BJ (cell line): ENCODE measurements at regions of chr16 and their contacts with region 1.

Region 1: DNA sequence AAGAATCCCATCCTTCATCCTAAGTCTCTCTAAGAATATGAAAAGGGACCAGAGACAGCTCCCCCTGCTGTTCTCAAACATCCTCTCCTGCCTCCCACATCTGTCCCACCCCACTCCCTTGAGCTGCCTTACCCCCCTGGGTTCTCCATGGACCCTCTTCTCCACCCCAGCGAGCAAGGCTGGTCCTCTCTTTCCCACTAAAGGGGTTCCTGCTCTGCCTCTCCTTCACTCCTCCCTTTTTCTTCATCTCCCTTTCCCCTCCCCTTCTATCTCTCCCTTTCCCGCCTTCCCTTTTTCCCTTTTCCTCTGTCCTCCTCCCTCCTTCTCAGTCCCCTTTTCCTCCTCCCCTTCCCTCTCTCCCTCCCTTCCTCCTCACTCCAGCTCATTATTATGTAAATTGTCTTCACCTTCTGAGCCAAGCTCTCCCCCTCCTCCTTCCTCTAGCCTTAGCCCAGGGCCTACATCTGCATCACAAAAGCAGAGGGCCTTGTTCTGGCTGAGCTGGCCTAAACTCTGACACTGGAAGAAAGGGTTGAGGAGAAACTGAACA is 90.0 kb downstream of the GNAO1 start:
- DNase-seq: no peak
- H3K4me3 ChIP-seq: no peak overlapping the region
- H3K27me3 ChIP-seq: no peaks in the 10 kb centered on the region
- CTCF ChIP-seq: peak; percentile 52

Region 2: GRCh38 chr16:56263711-56264608 is 17.4 kb before region 1 on chr16:
- CTCF ChIA-PET with region 1: interaction called, 19 read pairs
- POLR2A ChIA-PET with region 1: no interaction called
- DNase-seq: no peak
- H3K4me3 ChIP-seq: no peak overlapping the region
- H3K27me3 ChIP-seq: no peaks in the 10 kb centered on the region
- CTCF ChIP-seq: no peak

Region 3: GRCh38 chr16:56269811-56270684 is 11.3 kb before region 1 on chr16:
- CTCF ChIA-PET with region 1: interaction called, 19 read pairs
- POLR2A ChIA-PET with region 1: no interaction called
- DNase-seq: peak; percentile 56
- H3K4me3 ChIP-seq: no peak overlapping the region
- H3K27me3 ChIP-seq: no peaks in the 10 kb centered on the region
- CTCF ChIP-seq: peak; percentile 71